Activated B cell treated with CpG ODN at 0.5 μM for 24 hours (primary cell): ENCODE measurements at regions of chr1 and their contacts with region 1.

Region 1: GRCh38 chr1:27445177-27445936 is 44.6 kb downstream of the WASF2 start:
- DNase-seq: no peak
- ATAC-seq: peak; percentile 47
- H3K4me3 Mint-ChIP-seq: peak overlapping the region; percentile 66
- H3K27ac Mint-ChIP-seq: peak overlapping the region; percentile 82
- H3K4me1 Mint-ChIP-seq: peaks cover 60% of the 10 kb centered on the region
- H3K27me3 Mint-ChIP-seq: no peaks in the 10 kb centered on the region
- CTCF ChIP-seq: no peak

Region 2: GRCh38 chr1:26900001-26900814 is 545.1 kb before region 1 on chr1 and contains the start of gene GPATCH3:
- CTCF ChIA-PET with region 1: no interaction called
- POLR2A ChIA-PET with region 1: interaction called, 12 read pairs
- intact Hi-C with region 1: no loop called
- DNase-seq: peak; percentile 68
- ATAC-seq: peak; percentile 89
- H3K4me3 Mint-ChIP-seq: peak within 1 kb of the TSS; percentile 99
- H3K27ac Mint-ChIP-seq: peak within 1 kb of the TSS; percentile 100
- H3K4me1 Mint-ChIP-seq: peaks cover 32% of the 10 kb centered on the region
- H3K27me3 Mint-ChIP-seq: no peaks in the 10 kb centered on the region
- CTCF ChIP-seq: no peak
- total RNA-seq, gene GPATCH3: 24.0 and 26.0 TPM in 2 replicates

Region 3: GRCh38 chr1:27357281-27358037 is 87.9 kb before region 1 on chr1:
- CTCF ChIA-PET with region 1: no interaction called
- POLR2A ChIA-PET with region 1: no interaction called
- intact Hi-C with region 1: no loop called
- DNase-seq: peak; percentile 80
- ATAC-seq: peak; percentile 66
- H3K4me3 Mint-ChIP-seq: peak overlapping the region; percentile 76
- H3K27ac Mint-ChIP-seq: peak overlapping the region; percentile 56
- H3K4me1 Mint-ChIP-seq: peaks cover 46% of the 10 kb centered on the region
- H3K27me3 Mint-ChIP-seq: no peaks in the 10 kb centered on the region
- CTCF ChIP-seq: peak; percentile 69

Region 4: DNA sequence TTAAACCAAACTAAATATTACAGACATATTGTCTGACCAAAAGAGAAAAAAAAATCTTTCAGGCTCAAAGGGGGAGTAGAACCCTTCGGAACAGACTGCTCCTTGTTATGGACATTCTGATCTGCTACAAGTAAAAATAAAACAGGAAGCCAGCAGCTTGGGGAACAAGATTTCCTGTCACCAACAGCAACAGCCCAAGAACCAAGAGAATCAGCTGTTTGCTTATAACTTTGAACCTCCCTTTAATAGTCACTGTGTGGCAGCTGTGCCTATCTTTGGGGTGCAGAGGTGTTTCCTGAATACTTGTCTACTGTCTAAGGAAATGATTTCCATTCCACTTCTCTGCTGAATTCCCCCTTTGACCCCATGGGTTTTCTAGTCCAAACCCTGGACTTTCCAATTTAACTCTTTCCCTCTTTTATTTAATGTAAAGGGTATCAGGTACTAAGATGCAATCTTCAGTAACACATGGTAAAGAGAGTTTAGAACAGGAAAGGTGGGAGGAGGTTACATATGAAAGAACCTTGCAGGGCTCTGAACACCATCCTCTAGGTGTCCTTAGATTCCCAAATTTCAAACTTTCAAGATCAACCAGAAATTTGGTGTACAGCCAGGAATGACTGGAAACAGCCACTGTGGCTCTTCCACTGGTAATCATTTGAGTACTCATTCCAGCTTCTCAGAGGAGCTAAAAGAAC is 14.3 kb before region 1 on chr1:
- CTCF ChIA-PET with region 1: interaction called, 4 read pairs
- POLR2A ChIA-PET with region 1: interaction called, 5 read pairs
- intact Hi-C with region 1: loop called (anchors 1 kb)
- DNase-seq: no peak
- ATAC-seq: peak; percentile 16
- H3K4me3 Mint-ChIP-seq: peak overlapping the region; percentile 57
- H3K27ac Mint-ChIP-seq: peak overlapping the region; percentile 85
- H3K4me1 Mint-ChIP-seq: peaks cover 95% of the 10 kb centered on the region
- H3K27me3 Mint-ChIP-seq: no peaks in the 10 kb centered on the region
- CTCF ChIP-seq: no peak

Region 5: DNA sequence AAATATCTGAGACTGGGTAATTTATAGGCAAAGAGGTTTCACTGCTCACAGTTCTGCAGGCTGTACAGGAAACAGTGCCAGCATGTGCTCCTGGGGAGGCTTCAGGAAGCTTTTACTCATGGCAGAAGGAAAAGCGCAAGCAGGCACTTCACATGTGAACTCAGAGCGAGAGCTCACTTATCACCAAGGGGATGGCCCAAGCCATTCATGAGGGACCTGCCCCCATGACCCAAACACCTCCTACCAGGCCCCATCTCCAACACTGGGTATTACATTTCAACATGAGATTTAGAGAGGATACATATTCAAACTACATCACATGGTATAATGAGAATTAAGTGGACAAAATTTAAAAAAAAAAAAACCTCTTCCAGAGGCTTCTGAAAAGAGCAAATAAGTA is 30.9 kb after region 1 on chr1:
- CTCF ChIA-PET with region 1: no interaction called
- POLR2A ChIA-PET with region 1: interaction called, 3 read pairs
- intact Hi-C with region 1: loop called (anchors 2 kb)
- DNase-seq: no peak
- ATAC-seq: no peak
- H3K4me3 Mint-ChIP-seq: peak overlapping the region; percentile 55
- H3K27ac Mint-ChIP-seq: peak overlapping the region; percentile 18
- H3K4me1 Mint-ChIP-seq: peaks cover 93% of the 10 kb centered on the region
- H3K27me3 Mint-ChIP-seq: no peaks in the 10 kb centered on the region
- CTCF ChIP-seq: no peak

Region 6: DNA sequence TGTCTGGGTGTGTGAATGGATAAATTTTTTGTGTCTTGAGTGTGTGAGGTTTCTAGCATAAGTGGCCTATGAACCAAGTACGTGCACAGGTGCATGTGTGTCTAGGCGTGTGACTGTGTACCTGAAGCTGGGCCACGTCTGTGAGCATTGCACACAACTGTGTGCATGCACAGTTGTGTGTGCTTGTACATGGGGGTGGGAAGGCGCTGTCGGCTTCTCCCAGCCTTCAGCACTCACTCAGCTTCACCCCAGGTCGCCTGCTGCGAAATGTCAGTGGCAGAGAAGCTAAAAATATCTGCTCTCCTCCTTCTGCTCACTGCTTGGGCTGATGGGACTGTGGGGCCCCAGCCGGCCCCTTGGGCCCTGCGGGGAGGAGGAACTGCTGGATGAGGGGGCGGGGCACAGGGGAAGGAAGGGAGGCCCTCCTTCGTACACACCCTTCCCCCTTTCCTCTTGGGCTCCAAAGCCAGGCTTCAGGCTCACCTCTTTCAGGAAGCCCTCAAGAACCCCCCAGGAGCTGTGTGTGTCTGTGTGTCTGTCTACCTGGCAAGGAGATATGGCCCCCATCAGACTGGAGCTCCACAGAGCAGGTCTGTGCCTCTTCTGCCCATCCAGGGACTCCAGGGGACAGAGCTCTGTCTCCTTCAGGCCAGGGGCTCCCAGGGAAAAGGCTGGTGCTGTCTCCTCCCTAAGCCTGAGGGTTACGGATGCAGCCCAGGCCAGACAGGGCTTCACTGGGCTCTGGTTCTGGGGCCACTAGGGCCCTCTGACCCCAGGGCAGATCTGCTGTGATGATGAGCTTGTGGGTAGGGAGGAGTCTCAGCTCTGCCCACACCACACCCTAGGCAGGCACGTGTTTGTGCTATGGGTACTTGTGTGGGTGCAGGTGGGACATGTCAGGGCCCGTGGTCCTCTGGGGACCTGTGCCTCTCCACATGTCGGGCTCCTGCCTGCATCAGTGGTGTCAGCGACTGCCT is 80.2 kb after region 1 on chr1:
- CTCF ChIA-PET with region 1: no interaction called
- POLR2A ChIA-PET with region 1: interaction called, 16 read pairs
- intact Hi-C with region 1: no loop called
- DNase-seq: peak; percentile 51
- ATAC-seq: peak; percentile 64
- H3K4me3 Mint-ChIP-seq: peak overlapping the region; percentile 41
- H3K27ac Mint-ChIP-seq: peak overlapping the region; percentile 79
- H3K4me1 Mint-ChIP-seq: peaks cover 76% of the 10 kb centered on the region
- H3K27me3 Mint-ChIP-seq: no peaks in the 10 kb centered on the region
- CTCF ChIP-seq: no peak